Caco-2 (cell line): ENCODE measurements at regions of chr18 and their contacts with region 1.

Region 1: DNA sequence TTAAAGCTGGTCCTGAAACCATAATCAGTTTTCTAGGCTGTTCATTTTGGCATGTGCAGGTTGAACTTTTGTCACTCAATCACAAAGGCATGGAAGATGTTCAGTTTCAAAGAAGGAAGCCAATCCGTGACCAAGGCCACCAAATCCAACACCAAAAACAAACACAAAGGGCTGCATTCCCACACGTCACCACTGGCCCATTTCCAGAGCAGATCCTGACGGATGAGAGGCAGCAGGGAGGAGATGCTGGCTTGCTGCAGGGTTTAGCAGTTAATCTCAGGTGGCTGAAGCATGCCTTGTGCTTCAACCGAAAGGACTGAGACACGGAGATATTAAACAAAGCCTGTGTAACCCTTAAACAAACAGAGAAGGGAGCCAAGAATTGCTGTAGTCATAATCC is 191.9 kb upstream of the CTAGE1 start:
- DNase-seq: peak in 1 of 2 experiments; percentile 20
- H3K4me3 ChIP-seq: no peak overlapping the region
- H3K4me3 Mint-ChIP-seq: no peak overlapping the region
- H3K27ac Mint-ChIP-seq: no peak overlapping the region
- H3K4me1 ChIP-seq: no peaks in the 10 kb centered on the region
- H3K4me1 Mint-ChIP-seq: peaks cover 9% of the 10 kb centered on the region
- H3K27me3 ChIP-seq: no peaks in the 10 kb centered on the region
- H3K27me3 Mint-ChIP-seq: peaks cover 2% of the 10 kb centered on the region
- CTCF ChIP-seq: no peak

Region 2: DNA sequence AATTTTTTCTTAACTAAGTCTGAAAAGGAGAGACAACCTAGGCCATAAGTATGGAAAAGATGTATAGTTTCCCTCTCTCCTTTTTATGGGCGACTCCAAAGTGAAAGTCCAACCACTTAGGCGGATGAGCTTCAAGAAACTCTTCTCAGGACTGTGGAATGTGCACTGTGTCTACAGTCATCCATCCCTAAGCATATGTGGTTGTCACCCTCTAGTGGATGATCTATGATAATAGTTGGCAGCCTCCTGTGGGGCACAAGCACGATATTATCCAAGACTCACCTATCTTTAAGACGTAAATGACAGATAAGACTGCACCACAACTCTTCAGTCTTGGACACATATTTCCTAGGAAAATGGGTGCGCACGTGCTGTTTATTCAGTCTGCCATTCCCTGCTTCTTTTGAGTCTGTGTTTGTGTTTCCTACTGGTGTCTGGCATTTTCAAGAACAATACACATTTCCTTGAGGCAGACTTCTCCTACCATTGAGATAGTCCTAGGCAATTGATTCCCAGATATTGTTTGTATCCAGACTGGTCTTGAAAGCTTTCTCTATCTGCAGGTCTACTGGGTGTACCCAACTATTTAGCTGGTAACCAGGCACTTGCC is 46.4 kb before region 1 on chr18:
- CTCF ChIA-PET with region 1: no interaction called
- POLR2A ChIA-PET with region 1: no interaction called
- intact Hi-C with region 1: no loop called
- DNase-seq: peak; percentile 68 to 75
- H3K4me3 ChIP-seq: no peak overlapping the region
- H3K4me3 Mint-ChIP-seq: no peak overlapping the region
- H3K27ac Mint-ChIP-seq: no peak overlapping the region
- H3K4me1 ChIP-seq: peaks cover 3% of the 10 kb centered on the region; the same call in 1 of the 2 replicates
- H3K4me1 Mint-ChIP-seq: peaks cover 9% of the 10 kb centered on the region
- H3K27me3 ChIP-seq: no peaks in the 10 kb centered on the region
- H3K27me3 Mint-ChIP-seq: no peaks in the 10 kb centered on the region
- CTCF ChIP-seq: peak; percentile 68 to 70

Region 3: DNA sequence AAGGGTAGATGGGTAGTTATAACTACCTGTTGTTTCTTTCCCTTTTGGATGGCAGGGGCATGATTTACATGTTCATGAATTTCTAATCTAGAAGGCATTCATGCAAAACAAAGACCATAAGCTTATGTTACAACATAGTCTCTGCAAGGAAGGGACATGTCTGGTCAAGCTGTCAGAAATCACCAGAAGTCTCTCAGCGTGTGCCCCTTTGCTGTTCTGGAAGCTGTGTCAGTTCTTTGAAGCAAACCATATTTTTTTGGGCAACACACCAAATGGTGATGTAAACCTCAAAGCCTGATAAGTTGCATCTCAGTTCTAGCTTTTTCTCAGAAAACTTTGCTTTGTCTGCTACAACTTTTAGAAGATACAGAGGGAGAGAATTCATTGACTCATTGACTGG is 18.4 kb before region 1 on chr18:
- CTCF ChIA-PET with region 1: no interaction called
- POLR2A ChIA-PET with region 1: no interaction called
- intact Hi-C with region 1: no loop called
- DNase-seq: no peak
- H3K4me3 ChIP-seq: no peak overlapping the region
- H3K4me3 Mint-ChIP-seq: no peak overlapping the region
- H3K27ac Mint-ChIP-seq: no peak overlapping the region
- H3K4me1 ChIP-seq: no peaks in the 10 kb centered on the region
- H3K4me1 Mint-ChIP-seq: no peaks in the 10 kb centered on the region
- H3K27me3 ChIP-seq: no peaks in the 10 kb centered on the region
- H3K27me3 Mint-ChIP-seq: peaks cover 11% of the 10 kb centered on the region
- CTCF ChIP-seq: no peak

Region 4: GRCh38 chr18:22703883-22704585 is 94.4 kb after region 1 on chr18:
- CTCF ChIA-PET with region 1: no interaction called
- POLR2A ChIA-PET with region 1: no interaction called
- intact Hi-C with region 1: loop called (anchors 10 kb)
- DNase-seq: peak in 1 of 2 experiments; percentile 56
- H3K4me3 ChIP-seq: no peak overlapping the region
- H3K4me3 Mint-ChIP-seq: no peak overlapping the region
- H3K27ac Mint-ChIP-seq: no peak overlapping the region
- H3K4me1 ChIP-seq: peaks cover 12% of the 10 kb centered on the region; the same call in 1 of the 2 replicates
- H3K4me1 Mint-ChIP-seq: peaks cover 13% of the 10 kb centered on the region
- H3K27me3 ChIP-seq: no peaks in the 10 kb centered on the region
- H3K27me3 Mint-ChIP-seq: no peaks in the 10 kb centered on the region
- CTCF ChIP-seq: peak; percentile 60 to 63